Psoas muscle (tissue), 8 donors: ENCODE measurements at regions of chr2 and their contacts with region 1.

Region 1: DNA sequence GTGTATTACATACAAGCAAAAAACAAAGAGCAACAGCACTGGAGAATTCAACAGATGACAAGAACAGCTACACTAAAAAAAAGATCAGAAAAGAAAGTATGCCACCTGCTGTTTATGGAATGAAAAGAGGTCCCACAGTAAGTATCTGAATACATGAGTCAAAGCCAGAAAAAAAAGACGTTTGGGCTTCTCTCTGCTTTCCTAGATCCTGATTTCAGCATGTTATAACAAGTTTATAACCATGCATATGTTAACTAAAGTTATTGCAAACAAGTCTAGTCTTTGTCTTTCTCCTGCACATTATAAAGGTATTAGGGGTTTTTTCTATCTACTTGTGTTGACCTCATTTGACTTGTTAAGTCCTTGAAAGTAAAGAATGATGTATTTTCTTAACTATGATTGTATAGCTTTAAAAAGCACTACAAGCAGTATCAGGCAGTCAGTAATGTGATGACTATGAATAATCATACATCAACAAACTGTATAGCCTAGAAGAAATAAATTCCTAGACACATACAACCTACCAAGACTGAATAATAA is 108.5 kb upstream of the COL5A2 start:
- DNase-seq: no peak
- ATAC-seq: peak; percentile 56 to 72 (median 66)
- H3K4me3 ChIP-seq: no peak overlapping the region
- H3K27ac ChIP-seq: no peak overlapping the region
- H3K4me1 ChIP-seq: no peaks in the 10 kb centered on the region
- H3K27me3 ChIP-seq: no peaks in the 10 kb centered on the region
- CTCF ChIP-seq: peak; percentile 54

Region 2: GRCh38 chr2:189115126-189115525 is 172.9 kb before region 1 on chr2:
- intact Hi-C with region 1: loop called (anchors 5 to 10 kb)
- DNase-seq: no peak
- ATAC-seq: no peak
- H3K4me3 ChIP-seq: no peak overlapping the region
- H3K27ac ChIP-seq: no peak overlapping the region
- H3K4me1 ChIP-seq: no peaks in the 10 kb centered on the region
- H3K27me3 ChIP-seq: no peaks in the 10 kb centered on the region
- CTCF ChIP-seq: peak; percentile 15

Region 3: DNA sequence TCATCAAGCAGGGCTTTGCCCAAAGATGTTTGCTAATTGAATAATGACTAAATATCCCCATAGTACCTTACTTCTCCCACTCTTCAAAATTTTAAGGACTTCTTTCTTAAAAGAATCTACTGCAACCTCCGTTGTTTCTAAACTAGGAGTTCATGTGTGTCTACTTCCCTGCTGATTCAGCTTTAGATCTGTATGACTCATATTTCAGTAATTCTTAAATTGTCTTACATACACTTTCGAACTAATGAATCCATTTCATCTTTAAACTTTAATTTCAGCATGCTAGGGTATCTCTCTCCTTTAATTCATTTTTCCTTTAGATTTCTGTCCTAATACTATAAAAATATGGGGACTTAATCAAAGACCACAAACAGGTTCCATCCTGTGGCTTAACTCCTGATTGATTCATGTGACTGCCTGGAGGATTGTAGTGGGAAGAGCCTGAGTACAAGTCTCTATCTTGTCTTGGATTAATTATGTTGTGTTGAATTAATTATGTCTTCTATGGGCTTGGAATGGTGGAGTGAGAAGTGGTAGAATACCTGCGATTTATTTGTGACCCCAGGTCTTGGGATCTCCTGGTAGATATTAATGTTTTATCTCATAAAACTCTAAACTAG is 83.6 kb before region 1 on chr2:
- intact Hi-C with region 1: no loop called
- DNase-seq: no peak
- ATAC-seq: no peak
- H3K4me3 ChIP-seq: no peak overlapping the region
- H3K27ac ChIP-seq: no peak overlapping the region
- H3K4me1 ChIP-seq: no peaks in the 10 kb centered on the region
- H3K27me3 ChIP-seq: no peaks in the 10 kb centered on the region
- CTCF ChIP-seq: no peak